ENCODE measurements at regions of chr19 and their contacts with region 1.

Region 1: GRCh38 chr19:11293433-11294389 is 2.2 kb upstream of the TSPAN16 start:
- DNase-seq: peak; percentile 99
- ATAC-seq: peak; percentile 94
- H3K4me3 Mint-ChIP-seq: peak overlapping the region; percentile 61
- H3K27ac Mint-ChIP-seq: peak overlapping the region; percentile 98
- H3K4me1 Mint-ChIP-seq: peaks cover 8% of the 10 kb centered on the region
- H3K27me3 Mint-ChIP-seq: no peaks in the 10 kb centered on the region; the same call in 1 of the 2 replicates
- CTCF ChIP-seq: peak; percentile 90

Region 2: GRCh38 chr19:10960314-10961072 is 333.2 kb before region 1 on chr19 and contains the start of gene SMARCA4:
- CTCF ChIA-PET with region 1: no interaction called
- POLR2A ChIA-PET with region 1: interaction called, 11 read pairs
- DNase-seq: peak; percentile 96
- ATAC-seq: peak; percentile 88
- H3K4me3 Mint-ChIP-seq: peak within 1 kb of the TSS; percentile 95
- H3K27ac Mint-ChIP-seq: peak within 1 kb of the TSS; percentile 86
- H3K4me1 Mint-ChIP-seq: peaks cover 19% of the 10 kb centered on the region
- H3K27me3 Mint-ChIP-seq: no peaks in the 10 kb centered on the region; the same call in 1 of the 2 replicates
- CTCF ChIP-seq: no peak
- total RNA-seq, gene SMARCA4: 268 to 295 TPM (median 284 TPM) in 3 replicates

Region 3: GRCh38 chr19:11261941-11262839 is 31.5 kb before region 1 on chr19 and contains the start of gene DOCK6:
- CTCF ChIA-PET with region 1: interaction called, 12 read pairs
- POLR2A ChIA-PET with region 1: no interaction called
- DNase-seq: peak; percentile 60
- ATAC-seq: peak; percentile 62
- H3K4me3 Mint-ChIP-seq: peak within 1 kb of the TSS; percentile 78
- H3K27ac Mint-ChIP-seq: no peak within 1 kb of the TSS
- H3K4me1 Mint-ChIP-seq: peaks cover 18% of the 10 kb centered on the region
- H3K27me3 Mint-ChIP-seq: no peaks in the 10 kb centered on the region; the same call in 1 of the 2 replicates
- CTCF ChIP-seq: no peak; the same call in 1 of the 2 replicates
- total RNA-seq, gene DOCK6: 88.8 to 100 TPM (median 90.7 TPM) in 3 replicates

Region 4: DNA sequence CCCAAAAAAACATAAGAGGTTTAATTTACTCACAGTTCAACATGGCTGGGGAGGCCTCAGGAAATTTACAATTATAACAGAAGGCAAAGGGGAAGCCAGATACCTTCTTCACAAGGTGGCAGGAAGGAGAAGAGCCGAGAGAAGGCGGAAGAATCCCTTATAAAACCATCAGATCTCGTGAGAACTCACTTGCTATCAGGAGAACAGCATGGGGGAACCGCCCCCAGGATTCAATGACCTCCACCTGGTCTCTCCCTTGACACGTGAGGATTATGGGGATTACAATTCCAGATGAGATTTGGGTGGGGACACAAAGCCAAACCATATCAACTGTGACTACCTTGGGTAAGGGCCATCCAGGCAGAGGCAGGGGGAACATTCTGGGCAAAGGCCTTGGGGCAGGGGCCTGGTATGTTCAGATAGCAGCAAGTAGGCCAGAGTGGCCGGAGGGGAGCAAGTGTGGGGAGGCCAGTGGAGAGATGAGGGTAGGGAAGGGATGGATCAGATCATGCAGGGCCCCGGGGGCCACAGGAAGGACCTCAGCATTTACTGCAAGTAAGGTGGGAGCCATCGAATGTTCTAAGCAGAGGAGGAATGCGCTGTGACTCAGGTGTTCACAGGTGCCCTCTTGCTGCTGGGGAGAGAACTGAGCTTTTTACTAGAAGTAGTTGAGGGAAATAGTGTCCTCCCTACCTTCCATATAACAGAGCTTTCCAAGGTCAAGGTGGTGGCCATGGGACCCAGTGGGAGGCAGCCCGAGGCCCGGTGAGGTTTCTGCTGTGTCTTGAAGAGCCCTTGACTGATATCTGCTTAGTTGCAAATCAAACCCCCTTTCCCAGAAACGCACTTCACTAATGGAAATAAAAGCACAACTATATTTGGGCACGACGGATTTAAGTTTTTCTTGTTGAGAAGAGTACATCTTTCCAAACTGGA is 27.7 kb after region 1 on chr19:
- CTCF ChIA-PET with region 1: interaction called, 33 read pairs
- POLR2A ChIA-PET with region 1: no interaction called
- DNase-seq: no peak
- ATAC-seq: peak; percentile 53
- H3K4me3 Mint-ChIP-seq: no peak overlapping the region
- H3K27ac Mint-ChIP-seq: no peak overlapping the region; the same call in 1 of the 2 replicates
- H3K4me1 Mint-ChIP-seq: peaks cover 16% of the 10 kb centered on the region
- H3K27me3 Mint-ChIP-seq: no peaks in the 10 kb centered on the region; the same call in 1 of the 2 replicates
- CTCF ChIP-seq: no peak

Region 5: GRCh38 chr19:11361037-11361770 is 67.5 kb after region 1 on chr19:
- CTCF ChIA-PET with region 1: interaction called, 31 read pairs
- POLR2A ChIA-PET with region 1: no interaction called
- DNase-seq: peak; percentile 100
- ATAC-seq: peak; percentile 91
- H3K4me3 Mint-ChIP-seq: peak overlapping the region; percentile 76
- H3K27ac Mint-ChIP-seq: no peak overlapping the region
- H3K4me1 Mint-ChIP-seq: peaks cover 16% of the 10 kb centered on the region
- H3K27me3 Mint-ChIP-seq: peaks cover 53% of the 10 kb centered on the region
- CTCF ChIP-seq: no peak

Region 6: GRCh38 chr19:11380653-11381534 is 87.2 kb after region 1 on chr19:
- CTCF ChIA-PET with region 1: interaction called, 59 read pairs
- POLR2A ChIA-PET with region 1: interaction called, 5 read pairs
- DNase-seq: peak; percentile 98
- ATAC-seq: peak; percentile 82
- H3K4me3 Mint-ChIP-seq: peak overlapping the region; percentile 91
- H3K27ac Mint-ChIP-seq: peak overlapping the region; percentile 100
- H3K4me1 Mint-ChIP-seq: peaks cover 32% of the 10 kb centered on the region
- H3K27me3 Mint-ChIP-seq: peaks cover 3% of the 10 kb centered on the region; the same call in 1 of the 2 replicates
- CTCF ChIP-seq: no peak; the same call in 1 of the 2 replicates

Region 7: DNA sequence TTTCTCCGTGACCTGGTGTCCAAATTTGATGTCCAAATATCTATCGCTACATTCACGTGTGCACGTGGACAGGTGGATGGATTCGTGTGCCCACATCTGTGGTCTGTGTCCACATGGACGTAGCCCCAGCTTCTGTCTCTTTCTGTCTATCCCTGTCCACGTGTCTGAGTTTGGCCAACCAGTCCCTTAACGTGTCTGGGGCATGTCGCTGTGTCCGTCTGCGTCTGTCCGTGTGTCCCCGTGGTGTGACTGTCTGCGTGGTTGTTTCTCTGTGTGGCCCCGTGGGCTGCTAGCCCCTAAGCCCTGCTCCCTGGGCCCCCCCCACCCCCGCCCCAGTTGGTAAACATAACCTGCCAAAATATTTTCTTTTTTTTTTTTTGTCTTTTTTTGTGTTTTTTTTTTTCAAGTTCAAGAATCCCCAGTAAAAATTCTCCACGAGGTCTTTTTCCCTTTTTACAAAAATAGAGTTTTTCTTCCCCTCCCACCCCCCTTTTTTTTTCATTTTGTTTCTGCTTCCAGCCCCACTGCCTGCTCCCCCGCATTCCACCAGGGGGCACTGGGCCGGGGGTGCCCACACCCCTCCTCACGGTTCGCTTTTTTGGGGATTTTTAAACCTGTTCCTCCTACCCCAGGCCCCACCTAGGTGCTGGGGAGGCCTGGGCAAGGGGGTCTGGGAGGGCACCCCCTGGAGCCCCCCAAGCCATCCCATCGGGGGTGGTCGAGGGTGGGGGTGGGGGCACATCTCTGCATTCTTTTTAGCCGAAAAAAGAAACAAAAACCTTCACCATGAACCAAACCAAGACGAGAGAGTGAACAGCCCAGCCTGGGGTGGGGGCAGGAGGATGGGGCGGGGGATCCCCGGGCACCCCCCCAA is 160.0 kb after region 1 on chr19:
- CTCF ChIA-PET with region 1: interaction called, 14 read pairs
- POLR2A ChIA-PET with region 1: no interaction called
- DNase-seq: peak; percentile 64
- ATAC-seq: peak; percentile 49
- H3K4me3 Mint-ChIP-seq: no peak overlapping the region; the same call in 1 of the 2 replicates
- H3K27ac Mint-ChIP-seq: peak overlapping the region; percentile 93
- H3K4me1 Mint-ChIP-seq: peaks cover 28% of the 10 kb centered on the region
- H3K27me3 Mint-ChIP-seq: no peaks in the 10 kb centered on the region; the same call in 1 of the 2 replicates
- CTCF ChIP-seq: peak; percentile 46; the same call in 1 of the 2 replicates

Measured in WTC11 (cell line).